ENCODE measurements at regions of chr16 and their contacts with region 1.

Region 1: GRCh38 chr16:84116720-84117493 is at the start of gene MBTPS1:
- DNase-seq: peak; percentile 99
- ATAC-seq: peak; percentile 90 to 98 (median 92)
- H3K4me3 ChIP-seq: peak within 1 kb of the TSS; percentile 99
- H3K4me3 Mint-ChIP-seq: peak within 1 kb of the TSS; percentile 93
- H3K27ac ChIP-seq: peak within 1 kb of the TSS; percentile 89
- H3K27ac Mint-ChIP-seq: peak within 1 kb of the TSS; percentile 91 to 92
- H3K4me1 ChIP-seq: peaks cover 23% of the 10 kb centered on the region
- H3K4me1 Mint-ChIP-seq: peaks cover 13 to 17% of the 10 kb centered on the region in 2 donors
- H3K27me3 ChIP-seq: no peaks in the 10 kb centered on the region
- H3K27me3 Mint-ChIP-seq: no peaks in the 10 kb centered on the region
- CTCF ChIP-seq: peak; percentile 16
- total RNA-seq, gene MBTPS1: 85.2 to 124 (median 113) TPM

Region 2: GRCh38 chr16:84013787-84014569 is 102.9 kb before region 1 on chr16:
- intact Hi-C with region 1: no loop called
- DNase-seq: peak; percentile 17 to 62
- ATAC-seq: peak; percentile 78 to 87 (median 82)
- H3K4me3 ChIP-seq: no peak overlapping the region
- H3K4me3 Mint-ChIP-seq: no peak overlapping the region
- H3K27ac ChIP-seq: no peak overlapping the region
- H3K27ac Mint-ChIP-seq: no peak overlapping the region
- H3K4me1 ChIP-seq: peaks cover 8% of the 10 kb centered on the region
- H3K4me1 Mint-ChIP-seq: peaks cover 10% of the 10 kb centered on the region in 2 donors
- H3K27me3 ChIP-seq: no peaks in the 10 kb centered on the region
- H3K27me3 Mint-ChIP-seq: no peaks in the 10 kb centered on the region
- CTCF ChIP-seq: no peak

Region 3: DNA sequence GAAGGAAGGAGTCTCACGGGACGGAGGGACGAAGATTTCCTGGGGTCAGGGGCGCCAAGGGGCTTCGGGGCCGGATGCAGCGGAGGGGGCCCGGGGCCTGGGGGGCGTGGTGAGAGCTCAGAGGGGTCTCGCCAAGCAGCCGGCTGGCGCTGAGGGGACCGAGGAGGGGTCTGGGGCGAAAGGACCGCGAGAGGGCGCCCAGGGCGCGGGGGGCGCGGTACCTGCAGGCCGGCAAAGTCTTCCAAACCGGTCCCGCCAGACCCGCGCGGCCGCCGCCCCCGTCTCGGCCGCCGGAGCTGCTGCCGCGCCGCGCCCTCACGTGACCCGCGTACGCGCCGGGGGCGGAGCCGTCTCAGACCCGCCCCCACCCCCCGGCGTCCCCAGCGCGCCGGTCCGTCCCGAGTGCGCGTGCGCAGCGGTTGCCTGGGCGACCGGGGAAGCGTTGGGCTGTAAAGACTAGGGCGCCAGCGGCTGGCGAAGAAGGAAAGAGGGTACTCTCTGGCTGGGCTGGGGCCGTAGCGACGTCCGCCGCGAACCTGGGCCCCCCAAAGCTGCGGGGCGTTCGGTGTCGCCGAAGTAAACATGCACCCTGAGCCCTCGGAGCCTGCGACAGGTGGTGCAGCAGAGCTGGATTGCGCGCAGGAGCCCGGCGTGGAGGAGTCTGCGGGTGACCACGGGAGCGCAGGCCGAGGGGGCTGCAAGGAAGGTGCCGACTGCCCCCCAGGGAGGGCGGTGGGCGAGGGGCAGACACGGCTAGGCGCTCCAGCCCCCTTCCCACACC is 28.1 kb after region 1 on chr16 and contains the starts of genes DNAAF1 and HSDL1:
- intact Hi-C with region 1: loop called (anchors 1 kb)
- DNase-seq: peak; percentile 97 to 98
- ATAC-seq: peak; percentile 90 to 95 (median 93)
- H3K4me3 ChIP-seq: peak within 1 kb of the TSS; percentile 61
- H3K4me3 Mint-ChIP-seq: peak within 1 kb of the TSS; percentile 94
- H3K27ac ChIP-seq: peak within 1 kb of the TSS; percentile 45
- H3K27ac Mint-ChIP-seq: peak within 1 kb of the TSS; percentile 82 to 88
- H3K4me1 ChIP-seq: peaks cover 12% of the 10 kb centered on the region
- H3K4me1 Mint-ChIP-seq: peaks cover 18 to 19% of the 10 kb centered on the region in 2 donors
- H3K27me3 ChIP-seq: no peaks in the 10 kb centered on the region
- H3K27me3 Mint-ChIP-seq: peaks cover 6 to 9% of the 10 kb centered on the region in 2 donors
- CTCF ChIP-seq: no peak
- total RNA-seq, gene DNAAF1: 0.43 to 2.9 (median 0.95) TPM
- total RNA-seq, gene HSDL1: 11.2 to 15.3 (median 13.5) TPM

Region 4: DNA sequence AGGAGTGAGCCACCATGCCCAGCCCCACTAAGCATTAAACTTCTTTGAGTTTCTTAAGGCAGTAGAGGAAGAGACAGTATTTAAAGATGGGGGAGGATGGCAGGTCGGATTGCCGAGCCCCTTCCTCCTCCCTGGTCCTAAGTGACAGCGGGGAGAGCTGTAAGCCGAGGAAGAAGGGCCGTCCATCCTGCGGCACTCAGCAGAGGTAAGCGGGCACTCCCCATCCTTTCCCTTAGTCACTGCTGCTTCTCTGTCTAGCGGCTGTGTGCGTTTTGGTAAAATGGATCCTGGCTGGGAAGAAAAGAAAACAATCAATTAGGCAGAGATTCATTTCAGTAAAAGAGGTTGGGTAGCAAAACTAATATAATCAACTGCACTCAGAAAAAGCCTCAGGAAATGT is 42.1 kb after region 1 on chr16:
- intact Hi-C with region 1: no loop called
- DNase-seq: no peak
- ATAC-seq: no peak
- H3K4me3 ChIP-seq: no peak overlapping the region
- H3K4me3 Mint-ChIP-seq: no peak overlapping the region
- H3K27ac ChIP-seq: no peak overlapping the region
- H3K27ac Mint-ChIP-seq: no peak overlapping the region
- H3K4me1 ChIP-seq: no peaks in the 10 kb centered on the region
- H3K4me1 Mint-ChIP-seq: no peaks in the 10 kb centered on the region
- H3K27me3 ChIP-seq: no peaks in the 10 kb centered on the region
- H3K27me3 Mint-ChIP-seq: peaks cover 22 to 46% of the 10 kb centered on the region in 2 donors
- CTCF ChIP-seq: no peak